ENCODE measurements at regions of chr1 and their contacts with region 1.

Region 1: DNA sequence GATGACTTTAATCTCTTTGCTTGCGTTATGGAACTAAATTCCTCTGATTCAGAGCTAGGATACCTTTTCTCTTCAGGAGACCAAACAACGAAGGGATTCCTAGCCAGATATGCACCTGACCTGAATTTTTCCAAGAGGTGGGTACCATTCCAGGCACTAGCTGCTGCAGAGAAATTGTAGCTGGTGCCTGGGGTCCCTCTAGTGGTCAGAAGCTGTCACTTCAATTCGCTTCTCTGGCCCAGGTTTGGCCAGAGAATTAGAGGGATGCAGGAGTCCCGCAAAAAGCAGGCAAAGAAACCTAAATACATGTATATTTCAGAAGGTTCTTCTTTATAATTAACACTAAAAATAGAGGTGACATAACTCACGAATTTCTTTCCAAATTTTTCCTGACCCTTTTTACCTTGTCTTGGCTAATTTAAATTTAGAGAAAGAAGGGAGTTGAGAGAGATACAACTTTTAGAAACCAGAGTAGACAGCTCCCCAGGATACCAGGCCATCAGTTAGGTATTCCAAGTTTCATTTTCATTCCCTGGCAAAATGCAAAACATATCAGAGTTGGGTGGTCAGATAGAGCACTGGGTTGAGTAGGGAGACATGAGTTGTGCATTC is 9.6 kb downstream of the ACKR1 start:
- DNase-seq: peak; percentile 35 to 65
- H3K4me3 ChIP-seq: no peak overlapping the region
- H3K27ac ChIP-seq: no peak overlapping the region
- H3K4me1 ChIP-seq: peaks cover 0 to 6% (median 0%) of the 10 kb centered on the region in 4 donors
- H3K27me3 ChIP-seq: peaks cover 0 to 74% (median 12%) of the 10 kb centered on the region in 3 donors
- CTCF ChIP-seq: peak in 5 of 7 experiments; percentile 51 to 88 (median 82)
- EP300 ChIP-seq: no peak
- POLR2A ChIP-seq: no peak

Region 2: DNA sequence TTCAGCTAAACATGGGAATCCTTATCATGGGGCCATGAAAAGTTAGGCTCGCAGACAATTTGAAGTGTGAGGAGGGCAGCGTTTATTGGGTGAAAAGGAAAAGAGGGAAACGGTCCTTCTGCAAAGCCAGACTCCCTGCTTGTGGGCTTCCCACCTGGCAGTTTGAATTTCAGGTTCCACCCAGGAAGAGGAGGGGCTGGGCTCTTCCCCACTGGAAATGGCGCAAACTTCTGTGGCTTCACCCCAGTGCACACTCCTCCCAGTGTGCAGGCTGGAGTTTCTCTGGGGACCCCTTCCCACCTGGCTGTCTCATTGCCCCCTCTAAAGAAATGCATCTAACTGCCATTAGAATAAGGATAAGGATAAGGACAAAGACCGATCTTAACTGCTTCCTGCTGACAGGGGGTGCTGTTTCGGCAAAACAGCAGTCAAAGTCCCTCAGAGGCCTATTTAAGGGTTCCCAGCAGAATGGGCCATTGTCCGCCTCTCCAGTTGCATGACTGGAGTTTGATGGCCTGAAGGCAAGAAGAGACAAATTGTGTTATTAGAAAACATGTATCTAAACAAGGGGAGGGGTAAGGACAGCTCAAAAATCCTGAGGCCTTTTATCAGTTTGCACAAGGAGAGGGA is 158.1 kb before region 1 on chr1:
- intact Hi-C with region 1: no loop called
- DNase-seq: no peak
- H3K4me3 ChIP-seq: no peak overlapping the region
- H3K27ac ChIP-seq: no peak overlapping the region
- H3K4me1 ChIP-seq: peaks cover 4 to 25% (median 16%) of the 10 kb centered on the region in 4 donors
- H3K27me3 ChIP-seq: no peaks in the 10 kb centered on the region
- CTCF ChIP-seq: no peak
- EP300 ChIP-seq: no peak
- POLR2A ChIP-seq: no peak

Region 3: GRCh38 chr1:159161001-159161718 is 53.1 kb before region 1 on chr1:
- intact Hi-C with region 1: loop called (anchors 10 kb)
- DNase-seq: peak; percentile 68 to 91
- H3K4me3 ChIP-seq: no peak overlapping the region
- H3K27ac ChIP-seq: peak overlapping the region in 2 of 5 donors; percentile 41 to 48
- H3K4me1 ChIP-seq: peaks cover 0 to 8% (median 0%) of the 10 kb centered on the region in 4 donors
- H3K27me3 ChIP-seq: peaks cover 0 to 9% (median 0%) of the 10 kb centered on the region in 3 donors
- CTCF ChIP-seq: peak in 5 of 7 experiments; percentile 82 to 98 (median 87)
- EP300 ChIP-seq: no peak
- POLR2A ChIP-seq: no peak

Region 4: DNA sequence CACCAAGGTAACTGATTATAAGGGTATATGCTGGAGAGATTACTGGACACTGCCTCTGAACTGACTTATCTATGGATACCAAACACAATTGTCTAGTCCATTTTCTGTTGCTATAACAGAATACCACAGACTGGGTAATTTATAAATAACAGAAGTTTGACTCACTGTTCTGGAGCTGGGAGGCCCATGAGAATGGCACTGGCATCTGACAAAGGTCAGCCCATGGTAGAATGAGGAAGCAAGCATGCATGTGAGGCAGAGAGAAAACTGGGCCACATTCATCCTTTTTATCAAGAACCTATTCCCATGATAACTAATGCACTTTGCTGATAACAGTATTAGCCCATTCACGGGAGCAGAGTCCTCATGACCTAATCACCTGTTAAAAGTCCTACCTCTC is 125.3 kb after region 1 on chr1:
- intact Hi-C with region 1: no loop called
- DNase-seq: no peak
- H3K4me3 ChIP-seq: no peak overlapping the region
- H3K27ac ChIP-seq: no peak overlapping the region
- H3K4me1 ChIP-seq: no peaks in the 10 kb centered on the region
- H3K27me3 ChIP-seq: no peaks in the 10 kb centered on the region
- CTCF ChIP-seq: no peak
- EP300 ChIP-seq: no peak
- POLR2A ChIP-seq: no peak

Measured in stomach (tissue), 19 donors.